ENCODE measurements at regions of chr12 and their contacts with region 1.

Region 1: DNA sequence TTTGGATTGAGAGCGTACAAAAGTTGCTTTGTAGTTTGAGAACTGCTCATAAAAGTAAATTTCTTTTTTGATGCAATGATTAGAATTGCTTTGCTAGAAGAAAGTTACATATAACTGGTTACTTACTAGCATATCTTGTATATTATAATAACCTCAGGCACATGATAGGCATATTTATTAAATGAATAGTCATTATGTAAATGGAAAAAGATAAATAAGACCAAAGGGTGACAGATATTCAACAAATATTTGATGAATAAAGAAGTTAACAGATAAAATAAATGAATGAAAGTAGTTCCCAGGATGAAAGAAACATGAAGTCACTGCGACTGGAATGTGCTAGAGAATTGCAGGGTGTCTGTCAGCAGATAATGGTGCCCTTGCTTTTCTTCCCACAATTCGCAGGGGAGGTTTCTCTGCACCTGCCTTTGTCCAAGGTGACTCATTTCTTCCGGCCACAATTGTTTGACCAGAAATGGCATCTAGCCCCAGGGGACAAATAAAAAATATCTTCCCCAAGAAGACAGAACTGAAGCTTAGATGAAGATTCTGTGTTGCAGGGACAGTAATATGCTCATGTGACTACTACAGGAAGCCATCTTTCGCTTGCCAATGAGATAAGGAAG is 315.9 kb upstream of the TBX3 start:
- DNase-seq: peak; percentile 100
- ATAC-seq: peak; percentile 74
- H3K4me3 ChIP-seq: no peak overlapping the region
- H3K27ac ChIP-seq: peak overlapping the region; percentile 92
- H3K4me1 ChIP-seq: peaks cover 39% of the 10 kb centered on the region
- H3K27me3 ChIP-seq: no peaks in the 10 kb centered on the region
- CTCF ChIP-seq: no peak

Region 2: GRCh38 chr12:114812858-114813761 is 186.8 kb before region 1 on chr12:
- CTCF ChIA-PET with region 1: no interaction called
- POLR2A ChIA-PET with region 1: no interaction called
- intact Hi-C with region 1: loop called (anchors 1 kb)
- DNase-seq: peak; percentile 92
- ATAC-seq: peak; percentile 92
- H3K4me3 ChIP-seq: peak overlapping the region; percentile 55
- H3K27ac ChIP-seq: peak overlapping the region; percentile 66
- H3K4me1 ChIP-seq: peaks cover 8% of the 10 kb centered on the region
- H3K27me3 ChIP-seq: no peaks in the 10 kb centered on the region
- CTCF ChIP-seq: no peak

Region 3: DNA sequence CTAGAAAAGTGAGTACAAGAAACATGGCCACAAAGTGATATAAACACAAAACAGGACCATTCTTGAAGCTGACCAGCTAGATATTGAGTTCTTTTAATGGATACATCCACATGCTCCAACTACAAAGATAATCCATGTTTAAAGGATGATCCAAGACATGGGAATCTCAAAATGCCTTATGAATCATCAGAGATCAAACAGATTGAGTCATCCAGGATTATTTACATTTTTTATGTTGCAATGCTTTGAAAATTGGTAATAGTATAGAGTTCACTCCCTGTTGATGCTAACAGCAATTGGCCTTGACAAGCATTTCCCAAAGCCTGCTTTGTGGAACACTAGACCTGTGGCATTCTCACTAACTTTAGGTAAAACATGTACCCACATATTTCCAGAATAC is 23.0 kb before region 1 on chr12:
- CTCF ChIA-PET with region 1: no interaction called
- POLR2A ChIA-PET with region 1: no interaction called
- intact Hi-C with region 1: loop called (anchors 1 kb)
- DNase-seq: peak; percentile 97
- ATAC-seq: peak; percentile 93
- H3K4me3 ChIP-seq: no peak overlapping the region
- H3K27ac ChIP-seq: peak overlapping the region; percentile 81
- H3K4me1 ChIP-seq: peaks cover 26% of the 10 kb centered on the region
- H3K27me3 ChIP-seq: no peaks in the 10 kb centered on the region
- CTCF ChIP-seq: no peak

Region 4: DNA sequence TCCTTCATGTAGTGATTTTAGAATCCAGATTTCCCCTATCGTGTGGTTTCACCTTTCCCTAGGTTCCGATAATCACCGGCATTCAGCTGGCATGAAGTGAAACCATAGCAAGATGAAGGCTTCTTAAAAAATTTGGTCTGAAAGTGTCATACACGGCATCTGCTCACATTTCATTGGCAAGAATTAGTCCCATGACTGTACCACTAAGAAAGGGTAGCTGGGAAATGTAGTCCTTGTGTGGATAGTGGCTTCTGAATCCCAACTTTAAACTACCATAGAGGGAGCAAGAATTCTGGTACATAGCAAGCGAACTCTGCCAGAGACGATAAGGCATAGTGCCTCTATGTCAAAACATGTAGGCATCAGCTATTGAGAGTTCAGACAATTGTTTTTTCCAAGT is 44.1 kb after region 1 on chr12:
- CTCF ChIA-PET with region 1: no interaction called
- POLR2A ChIA-PET with region 1: no interaction called
- intact Hi-C with region 1: no loop called
- DNase-seq: peak; percentile 19
- ATAC-seq: no peak
- H3K4me3 ChIP-seq: no peak overlapping the region
- H3K27ac ChIP-seq: no peak overlapping the region
- H3K4me1 ChIP-seq: peaks cover 6% of the 10 kb centered on the region
- H3K27me3 ChIP-seq: no peaks in the 10 kb centered on the region
- CTCF ChIP-seq: no peak

Region 5: DNA sequence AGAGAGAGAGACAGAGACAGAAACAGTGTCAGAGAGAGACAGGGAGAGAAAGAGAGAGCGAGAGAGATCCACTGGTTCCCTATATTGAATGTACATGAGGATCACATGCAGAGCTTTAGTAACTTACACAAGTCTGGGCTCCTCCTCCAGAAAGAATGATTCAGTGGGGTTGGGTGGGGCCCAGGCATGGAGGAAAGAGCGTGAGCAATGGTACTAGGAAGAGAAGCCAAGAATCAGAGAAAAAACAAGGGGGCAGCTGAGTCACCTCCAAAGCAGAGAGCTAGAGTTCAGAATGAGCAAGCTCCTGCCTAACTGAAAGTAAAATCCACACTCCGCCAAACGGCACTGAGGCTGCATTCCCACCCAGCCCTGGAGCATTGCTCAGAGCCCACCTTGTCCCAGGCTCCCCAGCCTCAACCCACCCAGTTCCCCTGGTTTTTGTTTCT is 354.1 kb after region 1 on chr12:
- CTCF ChIA-PET with region 1: no interaction called
- POLR2A ChIA-PET with region 1: no interaction called
- intact Hi-C with region 1: loop called (anchors 5 kb)
- DNase-seq: peak; percentile 98
- ATAC-seq: peak; percentile 94
- H3K4me3 ChIP-seq: peak overlapping the region; percentile 68
- H3K27ac ChIP-seq: peak overlapping the region; percentile 94
- H3K4me1 ChIP-seq: peaks cover 23% of the 10 kb centered on the region
- H3K27me3 ChIP-seq: no peaks in the 10 kb centered on the region
- CTCF ChIP-seq: no peak

Measured in PC-3 (cell line).